ENCODE measurements at regions of chr11 and their contacts with region 1.

Region 1: GRCh38 chr11:45158198-45158731 is 11.8 kb downstream of the PRDM11 start:
- DNase-seq: peak; percentile 72
- H3K4me3 ChIP-seq: no peak overlapping the region
- H3K27ac ChIP-seq: peak overlapping the region in 1 of 2 experiments; percentile 60; a peak in 1 of 4 replicates
- H3K4me1 ChIP-seq: peaks cover 0 to 52% of the 10 kb centered on the region in 2 experiments; a peak in 1 of 4 replicates
- H3K27me3 ChIP-seq: no peaks in the 10 kb centered on the region
- CTCF ChIP-seq: no peak
- EP300 ChIP-seq: no peak
- RAD21 ChIP-seq: peak; percentile 3; the same call in 1 of the 2 replicates

Region 2: GRCh38 chr11:45147017-45147728 is 11.1 kb before region 1 on chr11:
- CTCF ChIA-PET with region 1: no interaction called
- POLR2A ChIA-PET with region 1: interaction called, 10 read pairs
- DNase-seq: peak; percentile 98
- H3K4me3 ChIP-seq: peak overlapping the region; percentile 74 to 81
- H3K27ac ChIP-seq: peak overlapping the region; percentile 68 to 95
- H3K4me1 ChIP-seq: peaks cover 15 to 28% of the 10 kb centered on the region in 2 experiments; a peak in 2 of 4 replicates
- H3K27me3 ChIP-seq: no peaks in the 10 kb centered on the region; the same call in 1 of the 2 replicates
- CTCF ChIP-seq: no peak
- EP300 ChIP-seq: 0 out of 4 replicates have a peak, but pooled peaks of 1 of the 2 experiments have one; percentile 4
- RAD21 ChIP-seq: no peak

Region 3: GRCh38 chr11:45280449-45280848 is 122.2 kb after region 1 on chr11:
- CTCF ChIA-PET with region 1: no interaction called
- POLR2A ChIA-PET with region 1: no interaction called
- DNase-seq: no peak
- H3K4me3 ChIP-seq: no peak overlapping the region
- H3K27ac ChIP-seq: no peak overlapping the region
- H3K4me1 ChIP-seq: no peaks in the 10 kb centered on the region; a peak in 2 of 4 replicates
- H3K27me3 ChIP-seq: peaks cover 37% of the 10 kb centered on the region
- CTCF ChIP-seq: no peak
- EP300 ChIP-seq: no peak
- RAD21 ChIP-seq: no peak

Measured in SK-N-SH (cell line).